ENCODE measurements at regions of chr3 and their contacts with region 1.

Region 1: GRCh38 chr3:32143849-32144757 is 37.7 kb downstream of the GPD1L start:
- DNase-seq: peak; percentile 67
- ATAC-seq: peak; percentile 72
- H3K4me3 Mint-ChIP-seq: no peak overlapping the region
- H3K27ac Mint-ChIP-seq: no peak overlapping the region
- H3K4me1 Mint-ChIP-seq: peaks cover 20% of the 10 kb centered on the region
- H3K27me3 Mint-ChIP-seq: no peaks in the 10 kb centered on the region

Region 2: GRCh38 chr3:32154205-32154579 is 10.1 kb after region 1 on chr3:
- CTCF ChIA-PET with region 1: interaction called, 11 read pairs
- POLR2A ChIA-PET with region 1: no interaction called
- DNase-seq: no peak
- ATAC-seq: peak; percentile 33
- H3K4me3 Mint-ChIP-seq: no peak overlapping the region
- H3K27ac Mint-ChIP-seq: no peak overlapping the region
- H3K4me1 Mint-ChIP-seq: no peaks in the 10 kb centered on the region
- H3K27me3 Mint-ChIP-seq: no peaks in the 10 kb centered on the region

Region 3: GRCh38 chr3:32240159-32240545 is 96.0 kb after region 1 on chr3:
- CTCF ChIA-PET with region 1: no interaction called
- POLR2A ChIA-PET with region 1: no interaction called
- DNase-seq: peak; percentile 57
- ATAC-seq: peak; percentile 55
- H3K4me3 Mint-ChIP-seq: peak overlapping the region; percentile 78
- H3K27ac Mint-ChIP-seq: no peak overlapping the region
- H3K4me1 Mint-ChIP-seq: peaks cover 25% of the 10 kb centered on the region
- H3K27me3 Mint-ChIP-seq: peaks cover 31% of the 10 kb centered on the region

Measured in activated CD8-positive, alpha-beta T cell treated with anti-CD3 and anti-CD28 coated beads, Interleukin-2, amount 10 ng/mL, durations not matched to agents 7 days and 5 days (primary cell).